ENCODE measurements at regions of chr11 and their contacts with region 1.

Region 1: DNA sequence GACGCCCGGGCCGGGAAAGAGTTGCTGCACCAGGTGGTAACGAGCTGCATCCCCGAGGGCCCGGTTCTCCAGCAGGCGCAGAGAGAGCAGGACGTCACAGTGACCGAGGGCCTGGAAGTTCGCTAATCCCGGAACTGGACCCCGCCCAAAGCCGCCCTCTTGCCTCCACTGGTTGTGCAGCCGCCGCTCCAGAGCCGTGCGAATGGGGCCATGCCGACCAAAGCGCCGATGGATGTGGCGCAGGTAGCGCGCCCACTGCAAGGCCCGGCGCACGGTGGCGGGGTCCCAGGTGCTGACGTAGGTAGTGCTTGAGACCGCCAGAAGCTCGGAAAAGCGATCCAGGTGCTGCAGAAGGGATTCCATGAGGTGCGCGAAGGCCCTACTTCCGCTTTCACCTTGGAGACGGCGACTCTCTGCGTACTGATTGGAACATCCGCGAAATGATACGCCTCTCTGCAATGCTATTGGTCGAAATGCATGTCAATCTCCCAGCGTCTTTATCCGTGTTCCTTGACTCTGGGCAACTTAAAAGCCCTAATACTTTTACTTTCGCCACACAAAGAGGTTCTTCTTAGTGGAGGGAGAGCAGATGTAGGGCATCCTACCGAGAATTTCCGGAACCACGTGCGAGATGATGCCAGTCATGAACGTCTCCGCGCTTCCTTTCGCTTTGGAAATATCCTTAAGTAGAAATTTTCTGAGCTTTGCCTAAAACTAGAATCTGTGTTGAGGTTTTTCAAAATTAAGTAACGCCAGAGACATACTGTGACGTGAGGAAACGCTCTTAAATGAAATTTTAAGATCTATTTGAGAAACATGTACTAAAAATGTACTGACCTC is at the start of gene FANCF:
- DNase-seq: peak; percentile 99
- H3K4me3 ChIP-seq: peak within 1 kb of the TSS; percentile 75 to 89 (median 80)
- H3K27ac ChIP-seq: peak within 1 kb of the TSS; percentile 59
- H3K4me1 ChIP-seq: peaks cover 12% of the 10 kb centered on the region
- H3K27me3 ChIP-seq: no peaks in the 10 kb centered on the region
- CTCF ChIP-seq: no peak
- POLR2A ChIP-seq: peak; percentile 41
- total RNA-seq, gene FANCF: 7.4 and 7.6 TPM in 2 replicates

Region 2: GRCh38 chr11:22432291-22433093 is 193.2 kb before region 1 on chr11:
- CTCF ChIA-PET with region 1: interaction called, 3 read pairs
- POLR2A ChIA-PET with region 1: no interaction called
- dilution Hi-C with region 1: no loop called
- intact Hi-C with region 1: loop called (anchors 1 kb)
- DNase-seq: peak; percentile 82
- H3K4me3 ChIP-seq: peak overlapping the region; percentile 20 to 46 (median 45)
- H3K27ac ChIP-seq: peak overlapping the region; percentile 32
- H3K4me1 ChIP-seq: peaks cover 10% of the 10 kb centered on the region
- H3K27me3 ChIP-seq: no peaks in the 10 kb centered on the region
- CTCF ChIP-seq: no peak
- POLR2A ChIP-seq: no peak

Region 3: GRCh38 chr11:22567759-22568158 is 57.9 kb before region 1 on chr11:
- CTCF ChIA-PET with region 1: no interaction called
- POLR2A ChIA-PET with region 1: no interaction called
- dilution Hi-C with region 1: no loop called
- intact Hi-C with region 1: no loop called
- DNase-seq: no peak
- H3K4me3 ChIP-seq: no peak overlapping the region
- H3K27ac ChIP-seq: no peak overlapping the region
- H3K4me1 ChIP-seq: no peaks in the 10 kb centered on the region
- H3K27me3 ChIP-seq: no peaks in the 10 kb centered on the region
- CTCF ChIP-seq: no peak
- POLR2A ChIP-seq: no peak

Region 4: GRCh38 chr11:22703040-22703439 is 77.4 kb after region 1 on chr11:
- CTCF ChIA-PET with region 1: no interaction called
- POLR2A ChIA-PET with region 1: no interaction called
- dilution Hi-C with region 1: no loop called
- intact Hi-C with region 1: loop called (anchors 1 kb)
- DNase-seq: peak; percentile 93
- H3K4me3 ChIP-seq: peak overlapping the region in 1 of 3 experiments; percentile 22
- H3K27ac ChIP-seq: peak overlapping the region; percentile 68
- H3K4me1 ChIP-seq: peaks cover 20% of the 10 kb centered on the region
- H3K27me3 ChIP-seq: peaks cover 0 to 10% of the 10 kb centered on the region in 2 experiments
- CTCF ChIP-seq: no peak
- POLR2A ChIP-seq: no peak

Region 5: DNA sequence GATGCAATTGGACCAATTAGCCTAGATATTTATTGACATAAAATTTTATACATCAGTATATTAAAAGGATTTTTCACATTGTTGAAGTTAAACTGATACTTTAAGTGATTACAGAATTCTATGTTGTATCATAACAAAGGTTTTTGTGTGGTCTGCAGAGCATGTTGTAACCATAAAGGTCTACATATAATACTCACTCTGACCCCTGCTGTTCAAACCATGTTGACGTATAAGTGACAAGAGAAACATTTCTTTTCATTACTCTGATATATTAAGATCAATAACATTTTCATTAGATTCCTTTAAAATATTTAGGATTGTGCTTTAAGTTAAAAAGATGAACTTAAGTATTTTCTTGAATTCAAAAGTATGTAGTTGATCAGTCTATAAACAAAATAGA is 104.7 kb after region 1 on chr11:
- CTCF ChIA-PET with region 1: no interaction called
- POLR2A ChIA-PET with region 1: no interaction called
- dilution Hi-C with region 1: no loop called
- intact Hi-C with region 1: loop called (anchors 5 kb)
- DNase-seq: peak; percentile 39
- H3K4me3 ChIP-seq: no peak overlapping the region
- H3K27ac ChIP-seq: no peak overlapping the region
- H3K4me1 ChIP-seq: peaks cover 10% of the 10 kb centered on the region
- H3K27me3 ChIP-seq: no peaks in the 10 kb centered on the region
- CTCF ChIP-seq: no peak
- POLR2A ChIP-seq: no peak

Region 6: DNA sequence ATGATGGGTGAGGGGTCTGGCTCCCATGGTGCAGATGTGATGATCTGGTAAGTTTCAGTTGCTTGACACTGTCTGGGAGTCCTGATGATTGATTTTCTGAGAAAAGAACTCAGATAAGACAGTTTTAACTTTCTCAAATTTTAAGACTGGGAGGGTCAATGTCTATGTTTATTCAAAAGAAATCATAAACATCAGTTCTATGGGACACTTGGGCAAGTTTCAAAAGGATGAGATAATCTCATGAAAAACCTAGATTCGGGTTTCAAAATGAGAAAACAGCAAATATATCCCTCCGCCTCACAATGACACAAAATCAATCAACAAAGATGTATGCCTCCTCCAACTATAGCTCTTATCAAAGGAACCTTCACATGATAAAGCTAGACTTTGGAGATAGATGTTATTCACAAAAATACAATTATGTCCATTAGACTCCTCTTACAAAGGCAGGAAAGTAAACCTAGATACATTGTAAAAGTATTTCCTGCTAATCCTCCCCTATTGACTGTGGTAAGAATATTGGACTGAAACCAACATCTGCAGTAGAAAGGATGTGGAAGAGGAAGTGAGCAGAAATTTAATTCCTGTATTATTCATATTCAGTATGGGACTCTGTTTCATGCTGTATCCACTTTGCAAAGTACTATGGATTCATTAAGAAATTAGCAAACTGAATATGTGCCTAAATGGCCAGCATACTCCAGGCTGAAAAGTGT is 182.3 kb after region 1 on chr11:
- CTCF ChIA-PET with region 1: no interaction called
- POLR2A ChIA-PET with region 1: no interaction called
- dilution Hi-C with region 1: no loop called
- intact Hi-C with region 1: loop called (anchors 1 kb)
- DNase-seq: peak; percentile 89
- H3K4me3 ChIP-seq: peak overlapping the region in 1 of 3 experiments; percentile 16
- H3K27ac ChIP-seq: peak overlapping the region; percentile 52
- H3K4me1 ChIP-seq: peaks cover 29% of the 10 kb centered on the region
- H3K27me3 ChIP-seq: no peaks in the 10 kb centered on the region
- CTCF ChIP-seq: no peak
- POLR2A ChIP-seq: peak; percentile 61